HCT116 (cell line): ENCODE measurements at regions of chr3 and their contacts with region 1.

Region 1: DNA sequence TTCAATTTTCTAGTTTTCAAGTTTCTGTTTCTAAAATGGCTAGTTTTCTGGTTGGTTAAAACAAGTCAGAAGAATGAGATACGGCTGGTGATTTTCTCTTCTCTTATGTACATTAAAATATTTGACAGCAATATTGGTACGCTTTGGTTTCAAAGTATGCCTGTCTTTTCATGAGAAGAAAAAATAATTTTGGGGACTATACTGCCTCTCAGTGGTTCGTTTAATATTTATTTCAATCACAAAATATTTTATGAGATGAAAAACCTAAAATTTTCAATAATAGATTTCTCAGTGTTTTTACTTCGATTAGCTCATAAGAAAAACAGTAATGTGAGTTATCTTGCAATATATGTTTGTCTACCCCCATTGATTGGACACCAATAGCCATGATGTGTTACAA is 72.8 kb upstream of the AADACL2 start:
- DNase-seq: no peak
- ATAC-seq: no peak
- H3K4me3 ChIP-seq: no peak overlapping the region
- H3K27ac ChIP-seq: no peak overlapping the region
- H3K4me1 ChIP-seq: no peaks in the 10 kb centered on the region
- H3K27me3 ChIP-seq: no peaks in the 10 kb centered on the region
- CTCF ChIP-seq: peak in 1 of 3 experiments; percentile 36; a peak in 3 of 6 replicates
- POLR2A ChIP-seq: no peak
- RAD21 ChIP-seq: peak; percentile 39

Region 2: GRCh38 chr3:151439652-151440129 is 221.2 kb before region 1 on chr3:
- CTCF ChIA-PET with region 1: no interaction called
- POLR2A ChIA-PET with region 1: no interaction called
- RAD21 ChIA-PET with region 1: no interaction called
- intact Hi-C with region 1: loop called (anchors 1 kb)
- DNase-seq: peak; percentile 53
- ATAC-seq: peak; percentile 94
- H3K4me3 ChIP-seq: no peak overlapping the region
- H3K27ac ChIP-seq: no peak overlapping the region
- H3K4me1 ChIP-seq: no peaks in the 10 kb centered on the region
- H3K27me3 ChIP-seq: no peaks in the 10 kb centered on the region
- CTCF ChIP-seq: peak; percentile 77 to 90 (median 88)
- POLR2A ChIP-seq: no peak
- RAD21 ChIP-seq: peak; percentile 88